ENCODE measurements at regions of chr17 and their contacts with region 1.

Region 1: DNA sequence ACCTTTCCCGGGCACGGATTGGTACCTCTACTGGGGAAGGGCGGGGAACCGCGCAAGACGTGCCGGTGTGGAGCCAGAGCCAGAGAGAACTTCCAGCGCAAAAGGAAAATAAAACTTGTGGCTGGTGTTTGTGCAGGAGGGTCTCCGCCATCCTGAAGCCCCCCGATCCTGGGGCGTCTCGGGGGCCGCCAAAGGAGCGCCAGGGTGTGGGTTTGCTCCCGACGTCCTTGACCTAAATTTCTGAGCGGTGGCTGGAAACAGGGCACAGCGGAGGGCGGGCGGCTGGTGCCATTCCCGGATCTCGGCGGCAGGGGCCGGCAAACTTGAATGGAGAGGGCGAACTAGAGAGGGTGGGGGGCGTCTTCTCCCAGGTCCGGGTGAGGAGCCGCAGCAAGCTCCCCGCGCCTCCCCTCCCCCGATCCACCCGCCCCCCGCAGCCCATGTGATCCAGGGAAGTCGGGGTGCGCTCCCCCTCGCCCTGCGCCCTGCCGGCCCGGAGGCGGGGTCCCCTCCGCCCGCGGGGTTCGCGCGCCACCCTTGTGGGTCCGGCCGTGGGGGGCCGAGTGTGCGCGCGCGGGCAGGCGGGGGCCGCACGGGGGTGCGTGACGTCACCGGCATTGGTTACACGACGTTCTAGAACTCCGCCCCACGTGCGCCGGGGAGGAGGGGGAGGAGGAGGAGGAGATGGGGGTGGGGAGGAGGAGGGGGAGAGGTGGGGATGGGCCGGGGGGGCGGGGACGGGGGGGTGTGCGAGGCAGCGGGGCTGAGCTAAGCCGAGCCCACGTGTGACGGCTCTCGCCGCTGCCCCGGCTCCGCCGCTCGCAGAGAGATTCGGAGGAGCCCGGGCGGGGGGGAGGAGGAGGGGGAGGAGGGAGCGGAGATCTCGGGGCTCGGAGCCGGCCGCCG is at the start of gene MSI2:
- DNase-seq: peak; percentile 93
- ATAC-seq: peak; percentile 75
- H3K4me3 Mint-ChIP-seq: peak within 1 kb of the TSS; percentile 80
- H3K27ac Mint-ChIP-seq: peak within 1 kb of the TSS; percentile 79
- H3K4me1 Mint-ChIP-seq: peaks cover 42% of the 10 kb centered on the region
- H3K27me3 Mint-ChIP-seq: no peaks in the 10 kb centered on the region
- total RNA-seq, gene MSI2: 55.3 to 57.2 TPM

Region 2: DNA sequence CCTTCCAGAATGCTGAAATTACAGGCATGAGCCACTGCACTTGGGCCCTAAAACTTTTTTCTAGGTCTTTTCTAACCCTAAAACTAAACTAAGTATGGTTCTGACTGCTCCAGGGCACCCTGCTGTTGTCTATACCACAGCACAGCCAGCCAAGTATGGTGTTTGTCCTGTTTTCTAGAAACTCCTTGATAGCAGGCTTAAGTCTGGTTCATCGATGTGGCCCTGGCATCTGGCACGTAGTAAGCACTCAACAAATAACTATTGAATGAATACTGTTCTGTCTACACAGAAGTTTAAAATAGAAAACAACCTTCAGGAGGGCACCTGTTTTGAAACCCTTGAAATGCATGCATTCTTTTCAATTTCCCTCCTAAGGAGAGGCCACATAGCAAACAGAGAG is 215.5 kb before region 1 on chr17:
- CTCF ChIA-PET with region 1: no interaction called
- POLR2A ChIA-PET with region 1: interaction called, 12 read pairs
- intact Hi-C with region 1: no loop called
- DNase-seq: no peak
- ATAC-seq: no peak
- H3K4me3 Mint-ChIP-seq: no peak overlapping the region
- H3K27ac Mint-ChIP-seq: no peak overlapping the region
- H3K4me1 Mint-ChIP-seq: peaks cover 5% of the 10 kb centered on the region
- H3K27me3 Mint-ChIP-seq: peaks cover 57% of the 10 kb centered on the region

Region 3: GRCh38 chr17:57084802-57085447 is 171.1 kb before region 1 on chr17 and contains the start of gene AKAP1:
- CTCF ChIA-PET with region 1: no interaction called
- POLR2A ChIA-PET with region 1: no interaction called
- intact Hi-C with region 1: loop called in 1 of 2 experiments (anchors 1 kb)
- DNase-seq: peak; percentile 97
- ATAC-seq: peak; percentile 96
- H3K4me3 Mint-ChIP-seq: peak within 1 kb of the TSS; percentile 81
- H3K27ac Mint-ChIP-seq: peak within 1 kb of the TSS; percentile 87
- H3K4me1 Mint-ChIP-seq: peaks cover 44% of the 10 kb centered on the region
- H3K27me3 Mint-ChIP-seq: no peaks in the 10 kb centered on the region
- total RNA-seq, gene AKAP1: 27.0 to 29.8 TPM

Region 4: GRCh38 chr17:57284984-57285646 is 29.1 kb after region 1 on chr17:
- CTCF ChIA-PET with region 1: interaction called, 7 read pairs
- POLR2A ChIA-PET with region 1: no interaction called
- intact Hi-C with region 1: loop called in 1 of 2 experiments (anchors 2 kb)
- DNase-seq: peak; percentile 77
- ATAC-seq: peak; percentile 65
- H3K4me3 Mint-ChIP-seq: peak overlapping the region; percentile 54
- H3K27ac Mint-ChIP-seq: peak overlapping the region; percentile 72
- H3K4me1 Mint-ChIP-seq: peaks cover 59% of the 10 kb centered on the region
- H3K27me3 Mint-ChIP-seq: no peaks in the 10 kb centered on the region

Region 5: GRCh38 chr17:57463103-57463851 is 207.2 kb after region 1 on chr17:
- CTCF ChIA-PET with region 1: no interaction called
- POLR2A ChIA-PET with region 1: no interaction called
- intact Hi-C with region 1: loop called (anchors 2 kb)
- DNase-seq: peak; percentile 94
- ATAC-seq: peak; percentile 93
- H3K4me3 Mint-ChIP-seq: peak overlapping the region; percentile 26
- H3K27ac Mint-ChIP-seq: peak overlapping the region; percentile 94
- H3K4me1 Mint-ChIP-seq: peaks cover 71% of the 10 kb centered on the region
- H3K27me3 Mint-ChIP-seq: no peaks in the 10 kb centered on the region

Region 6: DNA sequence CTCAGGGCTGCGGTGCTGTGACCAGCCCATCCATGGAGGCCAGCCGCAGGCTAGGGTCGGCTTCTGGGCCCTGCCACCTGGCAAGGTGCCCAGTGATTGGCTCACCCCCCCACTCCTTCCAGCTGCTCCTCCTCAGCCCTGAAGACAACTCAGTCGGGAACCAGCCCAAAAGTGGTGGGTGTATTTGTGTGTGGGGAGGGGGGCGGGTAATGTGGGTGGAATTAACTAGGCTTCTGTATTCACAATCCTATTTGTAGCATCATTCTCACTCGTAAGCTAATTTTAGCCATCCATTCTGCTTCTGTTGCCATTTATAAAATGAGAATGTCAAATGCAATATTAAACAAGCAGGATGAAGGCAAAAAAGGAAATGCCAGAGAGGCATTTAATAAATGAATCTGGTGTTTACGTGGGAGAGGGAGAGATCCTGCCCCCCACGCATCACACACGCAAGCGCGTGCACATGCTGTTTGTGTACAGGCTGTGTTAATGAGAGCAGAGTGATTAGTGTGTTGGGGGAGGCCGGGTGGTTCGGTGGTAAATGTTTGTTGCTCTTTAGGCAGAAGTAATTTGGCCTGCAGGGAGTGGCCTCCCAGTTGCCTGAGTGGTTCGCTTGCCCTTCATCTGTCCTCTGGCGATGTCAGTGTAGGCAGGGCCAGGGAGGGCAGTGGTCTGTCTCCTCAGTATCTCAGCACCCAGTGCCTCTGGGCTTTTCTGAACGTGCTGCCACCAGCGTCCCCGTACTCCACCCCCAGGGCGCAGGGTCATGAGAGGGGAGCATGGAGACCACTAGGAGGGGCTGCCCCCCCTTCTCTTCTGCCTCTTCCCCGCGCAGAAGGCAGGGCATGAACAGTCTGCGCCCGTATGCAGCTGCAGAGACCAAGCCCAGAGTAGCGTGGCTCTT is 349.0 kb after region 1 on chr17:
- CTCF ChIA-PET with region 1: no interaction called
- POLR2A ChIA-PET with region 1: no interaction called
- intact Hi-C with region 1: loop called in 1 of 2 experiments (anchors 2 kb)
- DNase-seq: peak; percentile 56
- ATAC-seq: peak; percentile 21
- H3K4me3 Mint-ChIP-seq: peak overlapping the region; percentile 22
- H3K27ac Mint-ChIP-seq: peak overlapping the region; percentile 97
- H3K4me1 Mint-ChIP-seq: peaks cover 75% of the 10 kb centered on the region
- H3K27me3 Mint-ChIP-seq: no peaks in the 10 kb centered on the region

Measured in activated CD4-positive, alpha-beta T cell treated with anti-CD3 and anti-CD28 coated beads for 36 hours (primary cell).